GM23248 (cell line): ENCODE measurements at regions of chr11 and their contacts with region 1.

Region 1: GRCh38 chr11:126989942-126990715 is 10.4 kb downstream of the KIRREL3 start:
- DNase-seq: peak; percentile 87
- H3K4me3 ChIP-seq: peak overlapping the region; percentile 46
- H3K27ac ChIP-seq: peak overlapping the region; percentile 100
- H3K4me1 ChIP-seq: peaks cover 55% of the 10 kb centered on the region
- H3K27me3 ChIP-seq: no peaks in the 10 kb centered on the region

Region 2: DNA sequence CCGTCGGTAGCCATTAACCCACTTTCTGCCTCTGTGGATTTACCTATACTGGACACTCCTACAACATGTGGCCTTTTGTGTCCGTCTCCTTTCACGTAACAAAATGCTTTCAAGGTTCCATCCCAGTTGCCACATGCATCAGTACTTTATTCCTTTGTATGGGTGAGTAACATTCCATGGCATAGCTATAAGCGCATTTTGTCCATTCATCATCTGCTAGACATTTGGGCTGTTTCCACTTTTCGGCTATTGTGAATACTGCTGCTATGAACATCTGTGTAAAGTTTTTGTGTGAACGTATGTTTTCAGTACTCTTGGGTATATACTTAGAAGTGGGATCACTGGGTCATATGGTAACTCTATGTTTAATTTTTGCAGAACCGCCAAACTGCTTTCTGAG is 377.5 kb before region 1 on chr11:
- in situ Hi-C with region 1: loop called (anchors 10 kb)
- DNase-seq: no peak
- H3K4me3 ChIP-seq: no peak overlapping the region
- H3K27ac ChIP-seq: no peak overlapping the region
- H3K4me1 ChIP-seq: no peaks in the 10 kb centered on the region
- H3K27me3 ChIP-seq: no peaks in the 10 kb centered on the region

Region 3: GRCh38 chr11:126716456-126717083 is 273.6 kb before region 1 on chr11:
- in situ Hi-C with region 1: loop called (anchors 10 kb)
- DNase-seq: peak; percentile 47
- H3K4me3 ChIP-seq: no peak overlapping the region
- H3K27ac ChIP-seq: no peak overlapping the region
- H3K4me1 ChIP-seq: peaks cover 24% of the 10 kb centered on the region
- H3K27me3 ChIP-seq: no peaks in the 10 kb centered on the region